Gastrocnemius medialis (tissue), 4 donors: ENCODE measurements at regions of chr1 and their contacts with region 1.

Region 1: GRCh38 chr1:161117759-161118581 is at the starts of genes NIT1 and PFDN2:
- DNase-seq: peak; percentile 76 to 78
- ATAC-seq: peak; percentile 84 to 86
- H3K4me3 ChIP-seq: peak within 1 kb of the TSS; percentile 83 to 100 (median 99)
- H3K27ac ChIP-seq: peak within 1 kb of the TSS; percentile 90 to 100 (median 98)
- H3K4me1 ChIP-seq: peaks cover 53% of the 10 kb centered on the region in 2 donors
- H3K27me3 ChIP-seq: no peaks in the 10 kb centered on the region
- CTCF ChIP-seq: no peak
- POLR2A ChIP-seq: peak; percentile 91 to 94
- total RNA-seq, gene NIT1: 16.1 to 20.4 (median 17.9) TPM
- total RNA-seq, gene PFDN2: 62.4 to 106 (median 74.1) TPM

Region 2: DNA sequence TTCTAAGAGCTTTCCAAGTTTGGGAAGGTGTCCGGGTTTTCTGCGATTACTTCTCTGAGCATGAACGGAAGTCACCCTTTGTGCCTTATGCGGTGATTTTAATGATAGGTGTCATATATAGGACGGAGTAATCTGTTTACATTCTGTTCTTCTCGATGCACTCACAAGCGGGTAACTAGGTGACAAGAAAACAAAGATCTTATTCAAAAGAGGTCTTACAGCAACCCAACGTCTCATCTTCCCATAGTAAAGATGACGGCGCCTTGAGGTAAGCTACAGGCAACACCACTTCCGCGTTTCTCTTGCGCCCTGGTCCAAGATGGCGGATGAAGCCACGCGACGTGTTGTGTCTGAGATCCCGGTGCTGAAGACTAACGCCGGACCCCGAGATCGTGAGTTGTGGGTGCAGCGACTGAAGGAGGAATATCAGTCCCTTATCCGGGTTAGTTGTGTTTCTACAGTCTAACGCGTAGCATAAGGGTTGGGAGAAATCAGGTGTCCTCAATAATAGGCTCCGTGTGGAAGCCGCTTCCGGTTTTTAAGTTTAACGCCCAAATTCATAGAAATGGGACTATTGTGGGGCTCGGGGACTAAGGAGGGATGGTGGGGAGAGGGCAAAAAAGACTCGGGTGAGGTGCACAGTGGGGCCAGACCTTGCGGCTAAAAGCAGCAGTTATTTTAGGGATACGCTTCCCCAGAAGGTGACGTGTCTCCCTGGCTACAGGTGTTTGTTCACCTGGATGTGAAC is 35.9 kb after region 1 on chr1 and contains the start of gene UFC1:
- in situ Hi-C with region 1: no loop called
- intact Hi-C with region 1: loop called (anchors 1 kb)
- DNase-seq: peak; percentile 68 to 74
- ATAC-seq: peak; percentile 97 to 98
- H3K4me3 ChIP-seq: peak within 1 kb of the TSS; percentile 73 to 96 (median 82)
- H3K27ac ChIP-seq: peak within 1 kb of the TSS; percentile 88 to 98 (median 92)
- H3K4me1 ChIP-seq: peaks cover 9 to 18% of the 10 kb centered on the region in 2 donors
- H3K27me3 ChIP-seq: no peaks in the 10 kb centered on the region
- CTCF ChIP-seq: no peak
- POLR2A ChIP-seq: peak in 1 of 2 donors; percentile 26
- total RNA-seq, gene UFC1: 57.9 to 66.7 (median 63.5) TPM